Psoas muscle (tissue), 8 donors: ENCODE measurements at regions of chr13 and their contacts with region 1.

Region 1: GRCh38 chr13:41075034-41075433 is 13.7 kb downstream of the WBP4 start:
- DNase-seq: peak in 1 of 2 donors; percentile 37
- ATAC-seq: peak in 2 of 4 donors; percentile 50 to 61
- H3K4me3 ChIP-seq: no peak overlapping the region
- H3K27ac ChIP-seq: no peak overlapping the region
- H3K4me1 ChIP-seq: no peaks in the 10 kb centered on the region
- H3K27me3 ChIP-seq: no peaks in the 10 kb centered on the region
- CTCF ChIP-seq: peak; percentile 43

Region 2: DNA sequence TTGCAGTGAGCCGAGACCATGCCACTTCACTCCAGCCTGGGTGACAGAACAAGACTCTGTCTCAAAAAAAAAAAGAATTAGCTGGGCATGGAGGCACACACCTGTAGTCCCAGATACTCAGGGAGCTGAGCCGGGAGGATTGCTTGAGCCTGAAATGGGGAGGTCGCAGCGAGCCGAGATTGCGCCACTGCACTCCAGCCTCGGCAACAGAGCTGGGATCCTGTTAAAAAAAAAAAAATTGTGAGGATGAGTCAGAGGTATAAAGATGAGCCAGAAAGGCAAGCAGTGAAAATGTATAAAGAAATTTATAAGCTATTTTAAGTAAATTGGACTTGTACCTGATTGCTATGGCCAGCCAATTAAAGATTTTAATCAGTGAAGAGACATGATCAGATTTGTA is 36.4 kb after region 1 on chr13:
- intact Hi-C with region 1: no loop called
- DNase-seq: no peak
- ATAC-seq: no peak
- H3K4me3 ChIP-seq: no peak overlapping the region
- H3K27ac ChIP-seq: no peak overlapping the region
- H3K4me1 ChIP-seq: no peaks in the 10 kb centered on the region
- H3K27me3 ChIP-seq: no peaks in the 10 kb centered on the region
- CTCF ChIP-seq: no peak

Region 3: GRCh38 chr13:41222259-41222852 is 147.3 kb after region 1 on chr13:
- intact Hi-C with region 1: loop called (anchors 2 to 5 kb)
- DNase-seq: no peak
- ATAC-seq: peak; percentile 74 to 94 (median 87)
- H3K4me3 ChIP-seq: no peak overlapping the region
- H3K27ac ChIP-seq: no peak overlapping the region
- H3K4me1 ChIP-seq: no peaks in the 10 kb centered on the region
- H3K27me3 ChIP-seq: no peaks in the 10 kb centered on the region
- CTCF ChIP-seq: peak; percentile 81